GM18951 (cell line): ENCODE measurements at regions of chr6 and their contacts with region 1.

Region 1: GRCh38 chr6:148464319-148465010 is 121.8 kb downstream of the SASH1 start:
- POLR2A ChIP-seq: no peak

Region 2: DNA sequence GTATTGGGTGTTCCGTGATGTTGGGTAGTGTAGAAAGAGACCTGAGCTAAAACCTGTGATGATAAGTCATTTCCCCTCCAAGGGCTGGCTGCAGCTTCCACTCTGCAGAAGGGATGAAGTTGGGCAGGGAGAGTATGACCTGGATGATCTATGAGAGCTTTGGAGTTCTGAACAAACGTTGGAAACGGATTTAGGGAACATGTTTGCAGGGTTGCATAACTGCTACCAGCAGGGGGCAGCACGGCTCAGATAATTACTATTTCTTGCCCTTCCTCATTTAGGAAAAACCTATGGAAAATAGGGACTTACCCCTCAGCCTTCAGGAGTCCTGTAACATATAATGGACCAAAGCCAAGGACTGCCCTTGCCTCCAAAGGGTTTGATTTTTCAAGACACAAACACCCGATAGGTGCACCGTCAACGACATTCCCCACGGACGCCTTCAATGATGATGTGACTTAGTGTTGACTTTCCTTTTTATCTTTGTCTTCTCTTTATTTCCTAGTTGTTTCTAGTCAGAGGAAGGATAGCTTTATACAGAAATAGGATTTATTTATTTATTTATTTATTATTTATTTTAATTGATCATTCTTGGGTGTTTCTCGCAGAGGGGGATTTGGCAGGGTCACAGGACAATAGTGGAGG is 286.8 kb before region 1 on chr6:
- in situ Hi-C with region 1: loop called (anchors 25 kb)
- POLR2A ChIP-seq: no peak

Region 3: DNA sequence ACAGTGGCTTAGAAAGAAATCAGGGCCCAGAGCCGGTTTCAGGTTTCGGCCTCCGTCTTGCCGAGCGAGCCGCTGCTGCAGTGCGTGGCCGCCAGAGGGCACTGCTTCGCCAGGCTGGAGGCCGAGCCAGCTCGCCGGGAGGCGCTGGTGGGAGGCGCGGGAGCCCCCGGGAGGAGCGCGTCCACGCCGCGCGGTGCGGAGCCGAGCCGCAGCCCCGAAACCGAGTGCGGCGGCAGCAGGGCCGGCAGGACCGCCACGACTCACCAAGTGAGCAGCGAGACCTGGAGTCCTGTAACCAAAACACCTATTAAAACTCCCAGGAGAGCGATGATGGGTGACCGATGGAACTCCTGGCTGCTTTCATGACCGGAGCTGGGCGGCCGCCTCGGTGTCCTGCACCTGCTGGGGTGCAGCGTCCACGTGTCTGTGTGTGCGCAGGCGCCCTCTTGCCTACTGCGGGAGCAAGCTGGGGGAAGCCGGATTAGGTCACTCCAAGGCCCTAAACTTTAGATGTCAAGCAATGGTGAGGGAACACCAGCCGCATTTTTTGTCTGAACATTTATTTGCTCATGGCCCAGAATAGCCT is 95.5 kb after region 1 on chr6:
- in situ Hi-C with region 1: no loop called
- POLR2A ChIP-seq: no peak